Heart right ventricle (tissue), 16 donors: ENCODE measurements at regions of chr1 and their contacts with region 1.

Region 1: DNA sequence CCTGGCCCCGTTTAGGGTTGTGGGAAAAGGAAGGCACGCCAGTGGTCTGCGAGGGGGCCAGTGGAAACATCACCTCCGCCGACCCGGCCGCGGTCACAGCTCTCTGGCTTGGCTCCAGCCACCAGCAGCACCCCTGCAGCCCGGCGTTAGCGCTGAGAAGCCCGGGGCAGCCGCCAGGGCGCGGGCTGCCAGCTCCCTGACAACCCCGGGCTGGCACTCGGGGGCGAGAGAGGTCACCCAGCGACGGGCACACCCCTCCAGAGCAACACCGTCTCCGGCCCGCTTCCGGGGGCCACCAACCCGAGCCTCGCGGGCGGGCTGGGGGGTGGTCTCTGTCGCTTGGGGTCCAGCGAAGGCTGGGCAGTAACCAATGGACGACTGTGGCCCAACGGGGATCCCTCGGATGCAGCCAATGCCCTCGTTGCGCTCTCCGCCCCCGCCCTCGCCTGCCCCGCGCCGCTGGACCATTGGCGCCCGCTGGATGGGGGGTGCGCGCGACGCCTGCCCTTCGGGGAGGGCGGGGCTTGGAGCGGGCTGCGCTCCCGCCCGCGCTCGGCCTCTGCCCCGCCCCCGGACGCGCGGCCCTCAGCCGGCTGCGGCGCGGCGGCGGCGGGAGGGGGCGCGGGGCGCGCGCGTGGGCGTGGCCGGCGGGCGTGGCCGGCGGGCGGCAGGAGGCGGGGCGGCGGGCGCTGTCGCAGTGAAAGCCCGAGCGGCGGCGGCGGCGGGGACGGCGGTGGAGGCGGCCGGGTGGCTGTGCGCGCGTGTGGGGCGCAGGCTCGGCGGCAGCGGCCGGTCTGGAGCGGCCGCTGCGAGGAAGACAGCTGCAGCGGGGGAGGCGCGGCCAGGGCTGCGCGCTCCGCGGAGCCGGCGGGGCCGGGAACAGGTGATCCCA is at the start of gene MAN1C1:
- DNase-seq: peak; percentile 90 to 92
- ATAC-seq: peak; percentile 90 to 94 (median 93)
- H3K4me3 ChIP-seq: peak within 1 kb of the TSS; percentile 78 to 100 (median 90)
- H3K27ac ChIP-seq: peak within 1 kb of the TSS; percentile 78 to 92 (median 88)
- H3K4me1 ChIP-seq: peaks cover 11 to 55% (median 43%) of the 10 kb centered on the region in 9 donors
- H3K27me3 ChIP-seq: peaks cover 0 to 10% (median 0%) of the 10 kb centered on the region in 7 donors
- CTCF ChIP-seq: peak; percentile 18 to 71 (median 45)
- total RNA-seq, gene MAN1C1: 9.7 to 23.4 (median 14.2) TPM

Region 2: DNA sequence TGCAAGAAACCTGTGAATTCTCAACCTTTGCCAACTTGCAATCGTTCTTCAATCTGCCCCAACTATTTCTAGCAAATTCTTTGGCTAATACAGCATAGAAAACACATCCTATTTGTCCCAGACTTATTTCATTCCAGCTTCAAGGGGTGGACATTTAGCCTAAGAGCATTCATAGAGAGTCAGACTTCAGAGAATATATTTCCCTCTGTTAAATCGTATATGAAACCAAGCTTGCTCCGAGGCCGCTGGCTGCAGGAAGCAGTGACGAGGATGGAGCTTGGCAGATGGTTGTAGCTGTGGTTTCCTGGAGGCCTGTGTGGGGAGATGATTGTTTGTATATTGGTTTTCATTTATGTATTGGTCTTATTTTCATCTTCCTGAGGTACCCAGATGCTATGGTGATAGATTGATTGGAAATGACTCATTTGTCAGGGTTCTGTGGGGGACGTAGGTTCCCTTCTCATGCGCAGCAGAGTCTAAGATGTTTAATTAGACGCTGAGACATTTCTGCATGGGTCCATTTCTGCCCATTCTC is 26.3 kb after region 1 on chr1:
- intact Hi-C with region 1: loop called in 1 of 10 experiments (anchors 2 kb)
- DNase-seq: no peak
- ATAC-seq: peak in 7 of 8 donors; percentile 34 to 89 (median 72)
- H3K4me3 ChIP-seq: peak overlapping the region in 3 of 10 donors; percentile 3 to 9 (median 8)
- H3K27ac ChIP-seq: peak overlapping the region in 9 of 10 donors; percentile 3 to 73 (median 48)
- H3K4me1 ChIP-seq: peaks cover 2 to 65% (median 42%) of the 10 kb centered on the region in 9 donors
- H3K27me3 ChIP-seq: no peaks in the 10 kb centered on the region
- CTCF ChIP-seq: no peak